ENCODE measurements at regions of chr17 and their contacts with region 1.

Region 1: GRCh38 chr17:7004398-7005253 is 7.8 kb upstream of the RNASEK start:
- DNase-seq: peak; percentile 76
- ATAC-seq: peak; percentile 86
- H3K4me3 ChIP-seq: no peak overlapping the region
- H3K27ac ChIP-seq: no peak overlapping the region
- H3K4me1 ChIP-seq: peaks cover 3% of the 10 kb centered on the region
- H3K27me3 ChIP-seq: no peaks in the 10 kb centered on the region
- CTCF ChIP-seq: peak; percentile 84
- EP300 ChIP-seq: no peak
- POLR2A ChIP-seq: no peak
- RAD21 ChIP-seq: peak; percentile 59; the same call in 1 of the 2 replicates

Region 2: DNA sequence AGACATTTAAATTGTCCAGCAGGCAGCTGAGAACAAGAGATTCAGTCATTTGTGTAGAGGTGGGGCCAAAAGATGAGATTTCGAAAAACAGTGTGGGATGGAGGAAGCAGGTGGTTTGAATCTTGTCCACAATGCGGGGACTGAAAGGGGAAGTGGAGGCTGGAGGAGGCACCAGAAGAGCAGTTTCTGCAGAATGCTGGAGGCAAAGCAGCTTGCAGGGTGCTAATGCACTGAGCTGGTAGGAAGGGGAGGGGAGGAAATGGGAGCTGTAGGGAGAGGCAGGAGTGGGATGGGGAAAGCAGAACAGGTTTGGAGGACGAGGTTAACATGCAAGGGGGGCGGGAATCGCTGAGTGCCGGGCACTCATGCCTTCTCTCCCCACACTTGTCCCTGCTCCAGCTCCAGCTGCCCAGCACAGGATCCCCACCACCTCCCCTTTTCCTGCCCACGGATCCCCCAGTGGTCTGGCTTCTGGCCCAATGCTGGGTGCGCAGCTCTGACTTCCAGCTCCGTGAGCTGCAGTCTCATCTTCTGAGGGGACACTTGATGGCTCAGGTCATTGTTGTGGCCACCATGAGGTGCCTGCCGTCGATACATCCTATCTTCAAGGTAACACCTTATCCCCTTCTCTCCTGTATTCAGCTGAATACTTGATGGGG is 343.7 kb before region 1 on chr17:
- CTCF ChIA-PET with region 1: interaction called, 5 read pairs
- POLR2A ChIA-PET with region 1: no interaction called
- in situ Hi-C with region 1: no loop called
- intact Hi-C with region 1: loop called (anchors 5 kb)
- DNase-seq: no peak
- ATAC-seq: no peak
- H3K4me3 ChIP-seq: no peak overlapping the region
- H3K27ac ChIP-seq: no peak overlapping the region
- H3K4me1 ChIP-seq: peaks cover 4% of the 10 kb centered on the region
- H3K27me3 ChIP-seq: no peaks in the 10 kb centered on the region
- CTCF ChIP-seq: no peak
- EP300 ChIP-seq: no peak
- POLR2A ChIP-seq: no peak
- RAD21 ChIP-seq: no peak

Region 3: DNA sequence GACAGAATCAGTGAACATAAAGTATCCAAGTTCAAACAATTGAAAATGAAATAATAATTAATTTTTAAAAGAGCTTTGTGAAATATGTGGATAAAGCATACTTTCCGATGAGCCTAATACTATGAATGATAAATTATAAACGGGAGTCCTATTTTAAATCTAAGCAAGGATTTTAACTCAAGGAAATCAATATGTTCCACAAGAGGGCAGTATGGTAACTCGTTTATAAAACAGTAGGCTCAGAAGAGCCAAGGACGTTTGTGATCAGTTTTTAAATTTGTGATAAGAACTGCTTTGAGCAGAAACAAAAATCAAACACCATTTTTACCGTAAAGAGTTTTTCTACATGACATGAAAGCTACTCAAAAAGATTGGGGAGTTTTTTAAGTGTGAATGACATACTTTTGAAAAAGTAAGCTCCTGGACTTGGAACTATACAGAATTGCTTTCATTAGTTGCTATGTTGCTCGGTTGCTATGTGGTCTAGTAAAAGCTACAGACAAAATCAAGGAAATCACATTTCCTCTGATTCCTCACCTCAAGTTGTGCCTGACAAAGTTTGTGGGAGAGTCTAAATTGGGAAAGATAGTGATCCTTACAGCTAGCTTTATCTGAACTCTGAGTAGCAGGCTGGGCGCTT is 161.3 kb before region 1 on chr17:
- CTCF ChIA-PET with region 1: interaction called, 14 read pairs
- POLR2A ChIA-PET with region 1: no interaction called
- in situ Hi-C with region 1: no loop called
- intact Hi-C with region 1: no loop called
- DNase-seq: peak; percentile 54
- ATAC-seq: no peak
- H3K4me3 ChIP-seq: no peak overlapping the region
- H3K27ac ChIP-seq: no peak overlapping the region
- H3K4me1 ChIP-seq: peaks cover 8% of the 10 kb centered on the region; the same call in 1 of the 2 replicates
- H3K27me3 ChIP-seq: peaks cover 0 to 1% of the 10 kb centered on the region in 2 experiments; a peak in 1 of 5 replicates
- CTCF ChIP-seq: peak; percentile 54
- EP300 ChIP-seq: no peak
- POLR2A ChIP-seq: no peak
- RAD21 ChIP-seq: no peak

Region 4: DNA sequence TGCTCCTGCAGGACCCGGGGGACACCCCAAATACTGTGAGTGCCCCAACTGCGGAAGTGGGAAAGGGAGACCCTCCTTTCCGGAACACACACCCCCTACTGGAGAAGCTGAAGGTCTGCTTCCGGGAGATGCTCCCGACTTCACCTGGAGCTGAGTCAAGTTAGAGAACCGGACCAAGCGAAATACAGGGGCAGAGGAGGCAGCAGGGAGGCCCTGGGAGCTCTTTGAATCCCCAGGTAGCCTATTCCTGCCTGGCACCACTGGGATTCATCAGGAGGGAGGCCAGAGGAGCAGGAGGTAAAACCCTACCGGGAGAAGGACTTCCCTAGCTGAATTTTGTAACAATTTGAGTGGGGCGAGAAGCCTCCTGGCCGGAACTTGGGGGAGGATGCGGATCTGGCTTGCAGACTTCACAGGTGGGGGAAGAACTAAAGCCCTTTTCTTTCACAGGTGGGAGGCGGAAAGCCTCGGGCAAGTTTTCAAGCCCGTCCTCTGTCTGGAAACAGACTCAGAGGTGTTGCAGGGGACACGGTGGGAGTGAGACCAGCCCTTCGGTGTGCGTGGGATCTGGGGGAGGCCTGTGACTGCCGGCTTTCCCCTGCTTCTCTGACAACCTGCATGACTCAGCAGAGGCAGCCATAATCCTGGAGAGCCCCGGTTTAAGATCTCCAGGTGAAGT is 150.7 kb before region 1 on chr17:
- CTCF ChIA-PET with region 1: no interaction called
- POLR2A ChIA-PET with region 1: no interaction called
- in situ Hi-C with region 1: loop called (anchors 10 kb)
- intact Hi-C with region 1: no loop called
- DNase-seq: peak; percentile 82
- ATAC-seq: peak; percentile 97
- H3K4me3 ChIP-seq: peak overlapping the region; percentile 63 to 91 (median 82)
- H3K27ac ChIP-seq: peak overlapping the region; percentile 79
- H3K4me1 ChIP-seq: peaks cover 48% of the 10 kb centered on the region
- H3K27me3 ChIP-seq: no peaks in the 10 kb centered on the region; a peak in 1 of 5 replicates
- CTCF ChIP-seq: peak; percentile 85
- EP300 ChIP-seq: no peak
- POLR2A ChIP-seq: peak; percentile 56 to 59
- RAD21 ChIP-seq: 0 out of 2 replicates have a peak, but pooled peaks have one; percentile 8

Region 5: GRCh38 chr17:6913608-6914443 is 90.8 kb before region 1 on chr17:
- CTCF ChIA-PET with region 1: interaction called, 10 read pairs
- POLR2A ChIA-PET with region 1: no interaction called
- in situ Hi-C with region 1: loop called (anchors 5 kb)
- intact Hi-C with region 1: no loop called
- DNase-seq: peak; percentile 18
- ATAC-seq: peak; percentile 66
- H3K4me3 ChIP-seq: no peak overlapping the region
- H3K27ac ChIP-seq: no peak overlapping the region
- H3K4me1 ChIP-seq: no peaks in the 10 kb centered on the region
- H3K27me3 ChIP-seq: no peaks in the 10 kb centered on the region
- CTCF ChIP-seq: peak; percentile 62
- EP300 ChIP-seq: no peak
- POLR2A ChIP-seq: no peak
- RAD21 ChIP-seq: no peak

Region 6: DNA sequence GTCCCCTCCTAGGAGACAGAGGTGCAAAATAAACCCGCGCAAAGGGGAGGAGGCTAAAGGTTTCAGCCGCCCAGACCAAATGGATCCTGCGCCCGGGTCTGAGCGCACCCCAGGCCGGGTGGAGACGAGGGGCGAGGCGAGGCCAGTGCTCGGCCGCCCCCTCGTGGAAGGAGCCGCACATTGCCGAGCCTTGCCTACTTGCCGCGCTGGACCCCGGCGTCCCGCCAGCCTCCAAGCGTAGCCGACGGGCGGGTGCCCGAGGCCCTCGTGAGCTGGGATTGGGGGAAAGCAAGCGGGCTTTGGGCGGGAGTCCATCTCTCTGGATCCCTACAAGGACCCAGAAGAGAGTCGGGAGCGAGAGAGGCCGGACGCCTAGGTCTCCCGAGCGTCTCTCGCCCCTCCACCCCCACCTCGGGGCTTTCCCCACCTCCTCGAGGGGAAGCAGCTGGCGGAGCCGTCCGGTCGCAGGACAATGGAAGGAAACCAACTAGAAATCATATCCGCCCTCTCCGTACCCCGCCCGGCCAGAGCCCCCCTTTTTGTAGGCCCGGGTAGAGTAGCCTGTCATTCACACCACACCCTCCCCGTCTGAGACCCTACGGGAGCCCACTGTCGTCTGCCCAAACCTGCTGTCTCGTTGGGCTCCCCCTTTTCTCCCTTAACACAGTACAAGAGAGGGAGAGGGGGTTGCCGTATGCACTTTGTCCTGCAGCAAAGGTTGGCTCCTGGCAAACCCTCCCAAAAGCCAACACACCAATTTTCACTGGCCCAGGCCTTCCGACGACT is 17.6 kb after region 1 on chr17:
- CTCF ChIA-PET with region 1: interaction called, 6 read pairs
- POLR2A ChIA-PET with region 1: no interaction called
- in situ Hi-C with region 1: no loop called
- intact Hi-C with region 1: loop called (anchors 1 kb)
- DNase-seq: no peak
- ATAC-seq: peak; percentile 85
- H3K4me3 ChIP-seq: peak overlapping the region; percentile 58 to 73 (median 71)
- H3K27ac ChIP-seq: no peak overlapping the region
- H3K4me1 ChIP-seq: peaks cover 55% of the 10 kb centered on the region
- H3K27me3 ChIP-seq: peaks cover 0 to 7% of the 10 kb centered on the region in 2 experiments; a peak in 4 of 5 replicates
- CTCF ChIP-seq: peak; percentile 97
- EP300 ChIP-seq: no peak
- POLR2A ChIP-seq: no peak
- RAD21 ChIP-seq: peak; percentile 94